IMR-90 (cell line): ENCODE measurements at regions of chr1 and their contacts with region 1.

Region 1: GRCh38 chr1:42657971-42658879 is at the start of gene PPIH:
- DNase-seq: peak; percentile 88
- ATAC-seq: peak; percentile 100
- H3K4me3 ChIP-seq: peak within 1 kb of the TSS; percentile 55
- H3K27ac ChIP-seq: peak within 1 kb of the TSS; percentile 60
- H3K4me1 ChIP-seq: no peaks in the 10 kb centered on the region
- H3K27me3 ChIP-seq: peaks cover 2% of the 10 kb centered on the region; the same call in 1 of the 2 replicates
- CTCF ChIP-seq: peak; percentile 24; the same call in 1 of the 2 replicates
- POLR2A ChIP-seq: peak; percentile 39; the same call in 1 of the 2 replicates
- RAD21 ChIP-seq: 0 out of 2 replicates have a peak, but pooled peaks have one; percentile 2
- total RNA-seq, gene PPIH: 22.4 and 36.1 TPM in 2 replicates

Region 2: GRCh38 chr1:42173155-42173933 is 484.9 kb before region 1 on chr1:
- CTCF ChIA-PET with region 1: no interaction called
- POLR2A ChIA-PET with region 1: no interaction called
- dilution Hi-C with region 1: no loop called
- in situ Hi-C with region 1: no loop called
- intact Hi-C with region 1: loop called (anchors 10 kb)
- DNase-seq: peak; percentile 28
- ATAC-seq: peak; percentile 76
- H3K4me3 ChIP-seq: no peak overlapping the region
- H3K27ac ChIP-seq: no peak overlapping the region
- H3K4me1 ChIP-seq: peaks cover 5% of the 10 kb centered on the region
- H3K27me3 ChIP-seq: no peaks in the 10 kb centered on the region
- CTCF ChIP-seq: peak; percentile 79
- POLR2A ChIP-seq: no peak
- RAD21 ChIP-seq: peak; percentile 61

Region 3: DNA sequence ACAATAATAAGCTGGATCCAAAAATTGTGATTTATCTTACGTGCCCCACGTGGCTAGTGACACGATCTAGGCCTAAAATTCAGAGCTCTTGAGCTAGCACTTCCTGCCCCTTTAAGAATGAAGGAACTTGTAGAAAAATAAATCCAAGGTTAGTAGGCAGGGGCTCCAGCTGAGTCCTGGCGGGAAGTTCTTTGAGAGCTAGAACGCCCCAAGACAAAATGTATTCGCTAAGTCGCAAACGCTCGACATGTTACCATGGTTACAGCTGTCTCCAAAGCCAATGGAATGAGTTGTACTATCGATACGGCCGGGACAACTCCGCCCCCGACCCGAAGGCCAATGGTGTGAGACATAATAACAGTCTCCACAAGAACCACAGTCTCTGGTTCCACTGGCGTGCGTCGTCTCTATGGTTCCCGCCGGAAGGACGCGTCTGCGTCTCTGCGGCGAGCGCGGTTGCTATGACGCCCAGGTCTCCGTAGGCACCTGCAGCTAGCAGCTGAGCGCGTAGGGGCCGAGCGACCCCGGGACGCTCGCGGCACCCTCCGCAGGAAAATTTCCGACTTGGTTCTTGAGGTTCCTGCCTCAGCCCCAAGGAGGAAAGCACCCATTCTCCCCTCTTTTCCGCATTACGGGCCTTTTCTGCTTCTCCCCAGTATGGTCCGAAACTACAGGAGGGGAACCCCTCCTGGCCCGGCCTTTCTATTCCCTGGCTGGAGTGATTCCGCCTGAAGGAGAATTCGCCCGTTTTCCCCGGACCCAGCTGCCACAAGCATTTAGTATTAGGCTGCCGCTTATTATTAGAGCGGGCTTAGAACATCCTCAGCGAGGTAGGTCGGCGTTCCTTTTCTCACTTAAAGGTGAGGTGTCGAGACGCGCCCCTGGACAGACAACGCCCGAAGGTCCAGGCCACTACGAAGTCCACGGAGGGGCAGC is 195.1 kb before region 1 on chr1 and contains the start of gene CCDC30:
- CTCF ChIA-PET with region 1: no interaction called
- POLR2A ChIA-PET with region 1: no interaction called
- dilution Hi-C with region 1: no loop called
- in situ Hi-C with region 1: no loop called
- intact Hi-C with region 1: loop called (anchors 5 kb)
- DNase-seq: peak; percentile 98
- ATAC-seq: peak; percentile 100
- H3K4me3 ChIP-seq: peak within 1 kb of the TSS; percentile 61
- H3K27ac ChIP-seq: no peak within 1 kb of the TSS
- H3K4me1 ChIP-seq: no peaks in the 10 kb centered on the region
- H3K27me3 ChIP-seq: peaks cover under 1% of the 10 kb centered on the region; the same call in 1 of the 2 replicates
- CTCF ChIP-seq: no peak
- POLR2A ChIP-seq: no peak
- RAD21 ChIP-seq: no peak
- total RNA-seq, gene CCDC30: under 0.01 and 0.18 TPM in 2 replicates

Region 4: DNA sequence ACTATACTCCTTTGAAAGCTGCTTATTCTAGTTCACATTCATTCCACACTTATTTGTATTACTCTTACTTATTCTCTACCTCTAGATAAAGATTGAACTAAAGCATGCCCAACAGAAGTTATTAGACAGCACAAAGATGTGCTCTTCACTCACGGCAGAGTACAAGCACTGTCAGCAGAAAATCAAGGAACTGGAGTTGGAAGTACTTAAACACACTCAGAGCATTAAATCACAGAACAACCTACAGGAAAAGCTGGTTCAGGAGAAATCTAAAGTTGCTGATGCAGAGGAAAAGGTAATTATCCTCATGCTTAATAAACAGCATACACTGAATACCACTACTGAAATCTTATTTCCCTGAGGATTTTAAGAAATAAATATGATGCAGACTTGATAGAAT is 81.3 kb before region 1 on chr1:
- CTCF ChIA-PET with region 1: interaction called, 4 read pairs
- POLR2A ChIA-PET with region 1: no interaction called
- dilution Hi-C with region 1: no loop called
- in situ Hi-C with region 1: no loop called
- intact Hi-C with region 1: loop called (anchors 5 kb)
- DNase-seq: no peak
- ATAC-seq: no peak
- H3K4me3 ChIP-seq: no peak overlapping the region
- H3K27ac ChIP-seq: no peak overlapping the region
- H3K4me1 ChIP-seq: no peaks in the 10 kb centered on the region
- H3K27me3 ChIP-seq: peaks cover 3% of the 10 kb centered on the region
- CTCF ChIP-seq: no peak
- POLR2A ChIP-seq: no peak
- RAD21 ChIP-seq: no peak

Region 5: GRCh38 chr1:42681741-42682483 is 23.7 kb after region 1 on chr1 and contains the start of gene YBX1:
- CTCF ChIA-PET with region 1: interaction called, 5 read pairs
- POLR2A ChIA-PET with region 1: no interaction called
- dilution Hi-C with region 1: no loop called
- in situ Hi-C with region 1: no loop called
- intact Hi-C with region 1: loop called (anchors 1 kb)
- DNase-seq: peak; percentile 99
- ATAC-seq: peak; percentile 90
- H3K4me3 ChIP-seq: peak within 1 kb of the TSS; percentile 84
- H3K27ac ChIP-seq: peak within 1 kb of the TSS; percentile 82
- H3K4me1 ChIP-seq: peaks cover 13% of the 10 kb centered on the region; the same call in 1 of the 2 replicates
- H3K27me3 ChIP-seq: no peaks in the 10 kb centered on the region
- CTCF ChIP-seq: no peak
- POLR2A ChIP-seq: peak; percentile 73
- RAD21 ChIP-seq: no peak
- total RNA-seq, gene YBX1: 843 and 1,307 TPM in 2 replicates